Endothelial cell of umbilical vein (primary cell): ENCODE measurements at regions of chr1 and their contacts with region 1.

Region 1: GRCh38 chr1:209860293-209860881 is 32.6 kb downstream of the UTP25 start:
- DNase-seq: peak; percentile 78
- H3K4me3 ChIP-seq: no peak overlapping the region
- H3K27ac ChIP-seq: no peak overlapping the region
- H3K4me1 ChIP-seq: peaks cover 2% of the 10 kb centered on the region
- H3K27me3 ChIP-seq: peaks cover 11% of the 10 kb centered on the region in 2 experiments
- CTCF ChIP-seq: peak; percentile 83 to 85
- POLR2A ChIP-seq: no peak

Region 2: GRCh38 chr1:209839875-209840491 is 20.4 kb before region 1 on chr1:
- CTCF ChIA-PET with region 1: interaction called, 11 read pairs
- POLR2A ChIA-PET with region 1: interaction called, 3 read pairs
- dilution Hi-C with region 1: no loop called
- intact Hi-C with region 1: no loop called
- DNase-seq: peak; percentile 99
- H3K4me3 ChIP-seq: peak overlapping the region in 1 of 3 experiments; percentile 2
- H3K27ac ChIP-seq: peak overlapping the region; percentile 80
- H3K4me1 ChIP-seq: peaks cover 61% of the 10 kb centered on the region
- H3K27me3 ChIP-seq: no peaks in the 10 kb centered on the region
- CTCF ChIP-seq: no peak
- POLR2A ChIP-seq: peak; percentile 10

Region 3: GRCh38 chr1:209875515-209875914 is 15.1 kb after region 1 on chr1:
- CTCF ChIA-PET with region 1: interaction called, 30 read pairs
- POLR2A ChIA-PET with region 1: no interaction called
- dilution Hi-C with region 1: no loop called
- intact Hi-C with region 1: no loop called
- DNase-seq: peak; percentile 51
- H3K4me3 ChIP-seq: no peak overlapping the region
- H3K27ac ChIP-seq: no peak overlapping the region
- H3K4me1 ChIP-seq: peaks cover 22% of the 10 kb centered on the region
- H3K27me3 ChIP-seq: peaks cover 3 to 11% of the 10 kb centered on the region in 2 experiments
- CTCF ChIP-seq: peak; percentile 16 to 42
- POLR2A ChIP-seq: no peak

Region 4: DNA sequence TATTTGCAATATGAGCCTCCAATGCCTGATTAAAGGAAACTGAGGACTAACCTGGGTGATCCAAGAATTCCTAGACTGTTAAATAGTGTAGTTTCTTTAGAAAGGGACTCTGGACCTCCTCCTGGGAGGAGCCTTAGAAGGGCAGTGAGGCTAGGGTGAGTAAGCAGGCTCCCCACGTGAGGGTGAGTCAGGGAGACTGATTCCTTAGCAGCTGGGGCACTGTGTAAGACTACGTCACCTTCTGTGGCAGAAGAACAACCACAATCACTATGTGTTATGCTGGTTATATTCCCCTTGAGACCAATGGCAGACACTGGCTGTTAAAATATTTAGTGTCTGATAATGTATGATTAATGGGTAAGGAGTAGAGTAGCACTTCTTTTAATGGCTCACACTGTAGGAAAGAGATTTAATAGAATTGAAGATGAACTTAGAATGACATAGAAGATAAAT is 24.3 kb after region 1 on chr1:
- CTCF ChIA-PET with region 1: interaction called, 11 read pairs
- POLR2A ChIA-PET with region 1: no interaction called
- dilution Hi-C with region 1: no loop called
- intact Hi-C with region 1: loop called (anchors 1 kb)
- DNase-seq: peak; percentile 97
- H3K4me3 ChIP-seq: no peak overlapping the region
- H3K27ac ChIP-seq: peak overlapping the region; percentile 71
- H3K4me1 ChIP-seq: peaks cover 21% of the 10 kb centered on the region
- H3K27me3 ChIP-seq: peaks cover 0 to 7% of the 10 kb centered on the region in 2 experiments
- CTCF ChIP-seq: no peak
- POLR2A ChIP-seq: peak; percentile 40

Region 5: DNA sequence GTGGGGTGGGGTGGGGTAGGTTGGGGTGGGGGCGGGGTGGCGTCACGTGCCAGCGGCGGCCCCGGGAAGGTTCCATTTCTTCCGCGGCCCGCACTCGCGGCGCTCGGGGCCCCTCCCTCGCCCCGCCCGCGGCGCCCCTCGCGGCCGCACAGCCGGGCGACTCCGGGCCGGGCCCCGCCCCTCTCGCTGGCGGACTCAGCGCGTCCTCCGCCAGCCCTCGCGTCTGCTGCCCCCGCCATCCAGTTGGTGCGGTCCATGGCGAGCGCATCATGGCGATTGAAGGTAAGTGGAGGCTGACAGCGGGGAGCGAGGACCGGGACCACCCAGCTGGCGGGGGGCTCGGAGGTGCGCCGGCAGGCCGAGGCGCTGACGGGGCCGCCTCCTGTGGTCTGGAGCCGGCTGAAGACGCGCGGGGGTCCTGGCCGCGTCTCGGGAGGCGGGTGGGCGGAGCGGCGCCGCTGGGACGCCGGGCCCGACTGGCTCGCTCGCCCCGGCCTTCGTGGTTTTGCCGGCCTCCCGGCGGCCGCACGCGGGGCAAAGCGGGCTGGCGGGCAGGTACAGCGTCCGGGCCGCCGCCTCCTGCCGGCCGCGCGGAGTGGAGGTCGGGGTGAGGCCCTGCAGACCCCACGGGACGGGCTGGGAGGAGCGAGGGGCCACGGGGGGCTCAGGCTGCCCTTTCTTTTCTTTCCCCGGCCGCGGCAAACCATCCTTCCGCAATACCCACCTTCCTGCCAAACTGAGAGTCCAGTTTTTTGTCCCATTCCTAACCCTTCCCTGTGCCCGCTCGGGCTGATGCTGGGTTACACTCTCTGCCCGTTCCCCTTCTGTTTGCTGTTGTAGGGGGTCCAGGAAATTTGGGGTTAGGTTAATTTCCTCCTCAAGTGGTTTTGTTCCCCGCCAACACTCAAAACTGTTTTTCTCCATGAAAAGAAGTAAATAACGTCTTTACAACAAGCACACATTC is 77.9 kb after region 1 on chr1 and contains the start of gene SYT14:
- CTCF ChIA-PET with region 1: interaction called, 5 read pairs
- POLR2A ChIA-PET with region 1: no interaction called
- dilution Hi-C with region 1: no loop called
- intact Hi-C with region 1: loop called (anchors 5 kb)
- DNase-seq: peak; percentile 14
- H3K4me3 ChIP-seq: peak within 1 kb of the TSS in 2 of 3 experiments; percentile 10 to 49
- H3K27ac ChIP-seq: no peak within 1 kb of the TSS
- H3K4me1 ChIP-seq: peaks cover 11% of the 10 kb centered on the region
- H3K27me3 ChIP-seq: peaks cover 11 to 37% of the 10 kb centered on the region in 2 experiments
- CTCF ChIP-seq: no peak
- POLR2A ChIP-seq: no peak
- total RNA-seq, gene SYT14: 0.18 and 0.30 TPM in 2 replicates

Region 6: DNA sequence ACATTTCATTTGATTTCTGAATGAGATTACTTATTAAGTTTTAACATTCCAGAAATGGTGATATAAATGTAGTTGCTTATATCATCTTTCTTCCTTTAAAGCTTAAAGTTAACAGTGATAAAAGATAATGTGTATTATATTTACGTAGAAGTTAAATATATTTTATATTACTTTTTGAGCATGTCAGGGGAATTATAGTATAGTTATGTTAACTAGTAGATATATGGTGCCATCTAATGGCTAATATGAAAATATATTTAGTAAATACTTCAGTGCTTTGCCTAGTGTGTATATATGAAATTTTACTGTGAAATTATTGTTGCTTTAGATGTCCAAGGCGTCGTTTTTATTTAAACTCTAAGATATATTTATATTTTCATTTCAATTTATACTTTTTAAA is 129.1 kb after region 1 on chr1:
- CTCF ChIA-PET with region 1: interaction called, 125 read pairs
- POLR2A ChIA-PET with region 1: no interaction called
- dilution Hi-C with region 1: no loop called
- intact Hi-C with region 1: loop called (anchors 1 kb)
- DNase-seq: peak; percentile 31
- H3K4me3 ChIP-seq: no peak overlapping the region
- H3K27ac ChIP-seq: no peak overlapping the region
- H3K4me1 ChIP-seq: no peaks in the 10 kb centered on the region
- H3K27me3 ChIP-seq: peaks cover 3 to 14% of the 10 kb centered on the region in 2 experiments
- CTCF ChIP-seq: no peak
- POLR2A ChIP-seq: no peak

Region 7: DNA sequence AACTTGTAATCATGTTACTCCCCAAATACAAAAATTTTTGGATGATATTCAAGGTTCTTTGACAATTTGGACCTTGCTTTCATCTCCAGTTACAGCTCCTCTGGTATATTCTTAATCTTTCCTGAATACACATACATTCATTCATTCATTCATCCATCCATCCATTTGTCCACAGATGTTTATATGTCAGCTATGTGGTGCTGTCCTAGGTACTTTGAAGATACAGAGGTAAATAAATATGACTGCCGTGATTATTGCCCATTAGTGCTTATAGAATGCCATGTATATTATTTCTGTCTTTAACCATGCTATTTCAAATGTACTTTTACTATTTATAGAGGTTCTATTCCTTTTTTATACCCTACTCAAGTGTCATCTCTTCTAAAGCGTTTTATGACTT is 149.8 kb after region 1 on chr1:
- CTCF ChIA-PET with region 1: no interaction called
- POLR2A ChIA-PET with region 1: no interaction called
- dilution Hi-C with region 1: no loop called
- intact Hi-C with region 1: no loop called
- DNase-seq: no peak
- H3K4me3 ChIP-seq: no peak overlapping the region
- H3K27ac ChIP-seq: no peak overlapping the region
- H3K4me1 ChIP-seq: no peaks in the 10 kb centered on the region
- H3K27me3 ChIP-seq: peaks cover 2 to 9% of the 10 kb centered on the region in 2 experiments
- CTCF ChIP-seq: no peak
- POLR2A ChIP-seq: no peak

Region 8: DNA sequence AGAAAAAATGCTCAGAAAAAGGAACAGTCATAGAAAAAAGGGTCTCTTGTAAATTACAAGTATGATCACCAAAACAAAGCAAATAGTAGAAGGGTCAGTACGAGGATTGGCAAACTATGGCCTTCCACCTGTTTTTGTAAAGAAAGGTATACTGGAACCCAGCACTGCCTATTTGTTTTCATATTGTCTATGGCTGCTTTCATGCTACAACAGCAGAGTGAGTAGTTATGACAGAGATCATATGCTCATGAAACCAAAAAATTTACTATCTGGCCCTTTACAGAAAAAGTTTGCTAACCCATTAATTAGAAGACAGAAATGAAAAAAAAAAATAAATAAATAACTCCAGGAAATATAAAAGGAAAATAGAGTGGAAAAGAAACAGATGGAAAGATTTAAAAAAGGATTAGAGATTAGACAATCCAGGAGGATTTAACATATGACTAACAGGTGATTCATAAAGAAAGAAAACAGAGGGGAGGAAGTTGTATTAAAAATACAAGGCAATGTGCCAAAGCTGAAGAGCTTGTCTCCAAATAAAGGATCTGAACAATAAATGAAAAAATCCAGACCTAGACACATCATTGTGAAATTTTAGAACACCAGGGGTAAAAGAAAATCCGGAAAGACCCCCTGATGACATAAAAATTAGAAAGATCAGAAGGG is 263.7 kb after region 1 on chr1:
- CTCF ChIA-PET with region 1: interaction called, 5 read pairs
- POLR2A ChIA-PET with region 1: no interaction called
- dilution Hi-C with region 1: no loop called
- intact Hi-C with region 1: loop called (anchors 5 kb)
- DNase-seq: peak; percentile 43
- H3K4me3 ChIP-seq: no peak overlapping the region
- H3K27ac ChIP-seq: no peak overlapping the region
- H3K4me1 ChIP-seq: peaks cover 9% of the 10 kb centered on the region
- H3K27me3 ChIP-seq: peaks cover 4 to 49% of the 10 kb centered on the region in 2 experiments
- CTCF ChIP-seq: no peak
- POLR2A ChIP-seq: no peak